ENCODE measurements at regions of chr13 and their contacts with region 1.

Region 1: DNA sequence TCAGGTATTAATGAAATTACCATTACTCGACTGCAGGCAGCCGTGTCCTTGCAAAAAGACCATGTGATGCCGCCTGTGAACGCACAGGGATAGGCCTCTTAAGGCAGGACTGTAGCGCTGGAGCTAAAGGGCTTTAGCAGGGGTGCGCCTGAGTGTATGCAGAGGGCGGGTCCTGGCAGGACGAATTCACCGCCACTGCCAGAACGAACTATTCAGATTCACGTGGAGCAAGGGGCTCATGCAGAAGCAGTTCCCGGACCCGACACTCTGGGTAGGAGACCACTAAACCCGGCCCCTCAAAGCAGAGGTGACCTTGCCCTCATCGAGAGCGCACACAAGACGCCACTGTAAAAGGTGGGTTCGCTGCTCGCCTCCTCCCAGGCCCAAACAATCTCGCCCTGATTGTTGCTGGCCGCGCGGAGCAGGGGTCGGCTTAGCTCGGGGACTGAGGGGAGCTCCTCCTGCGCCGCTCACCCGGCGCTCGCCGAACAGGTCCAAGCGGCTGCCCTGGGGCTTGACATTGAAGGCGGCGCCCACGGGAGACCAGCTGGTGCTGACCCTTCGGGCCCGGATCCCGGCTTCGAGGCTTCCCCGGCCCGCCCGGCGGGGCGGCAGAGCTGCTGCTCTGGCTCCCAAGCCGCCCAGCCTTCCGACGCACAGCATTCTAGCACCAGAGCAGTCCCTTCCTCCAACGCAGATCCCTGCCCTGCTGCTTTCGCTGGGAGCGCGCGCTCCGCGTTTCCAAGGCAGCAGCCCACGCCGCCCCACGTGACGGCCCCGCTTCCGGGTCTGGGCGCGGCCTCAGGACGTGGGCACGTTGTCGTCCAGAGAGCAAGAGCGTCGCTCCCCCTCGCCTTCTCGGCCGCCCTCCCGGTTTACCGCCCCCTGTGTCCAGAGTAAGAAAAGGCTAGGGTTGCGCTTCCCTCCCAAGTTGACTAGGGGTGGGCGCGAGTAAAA is at the start of gene MIPEP:
- DNase-seq: peak; percentile 82 to 87 (median 84)
- H3K4me3 ChIP-seq: peak within 1 kb of the TSS; percentile 43 to 88
- H3K4me3 Mint-ChIP-seq: peak within 1 kb of the TSS; percentile 89 to 95 (median 93)
- H3K27ac ChIP-seq: peak within 1 kb of the TSS; percentile 64
- H3K27ac Mint-ChIP-seq: peak within 1 kb of the TSS; percentile 75 to 92 (median 89)
- H3K4me1 ChIP-seq: peaks cover 16% of the 10 kb centered on the region
- H3K4me1 Mint-ChIP-seq: peaks cover 12 to 26% (median 19%) of the 10 kb centered on the region in 4 donors
- H3K27me3 ChIP-seq: no peaks in the 10 kb centered on the region
- H3K27me3 Mint-ChIP-seq: no peaks in the 10 kb centered on the region
- total RNA-seq, gene MIPEP: 8.8 to 9.1 TPM

Region 2: GRCh38 chr13:23899555-23899954 is 10.6 kb after region 1 on chr13:
- CTCF ChIA-PET with region 1: interaction called, 35 read pairs
- POLR2A ChIA-PET with region 1: no interaction called
- intact Hi-C with region 1: no loop called
- DNase-seq: peak in 3 of 5 donors; percentile 31 to 50 (median 34)
- H3K4me3 ChIP-seq: no peak overlapping the region
- H3K4me3 Mint-ChIP-seq: no peak overlapping the region
- H3K27ac ChIP-seq: no peak overlapping the region
- H3K27ac Mint-ChIP-seq: no peak overlapping the region
- H3K4me1 ChIP-seq: peaks cover 6% of the 10 kb centered on the region
- H3K4me1 Mint-ChIP-seq: peaks cover 1 to 14% (median 5%) of the 10 kb centered on the region in 4 donors
- H3K27me3 ChIP-seq: peaks cover 8% of the 10 kb centered on the region
- H3K27me3 Mint-ChIP-seq: peaks cover 23 to 27% of the 10 kb centered on the region in 2 donors

Region 3: DNA sequence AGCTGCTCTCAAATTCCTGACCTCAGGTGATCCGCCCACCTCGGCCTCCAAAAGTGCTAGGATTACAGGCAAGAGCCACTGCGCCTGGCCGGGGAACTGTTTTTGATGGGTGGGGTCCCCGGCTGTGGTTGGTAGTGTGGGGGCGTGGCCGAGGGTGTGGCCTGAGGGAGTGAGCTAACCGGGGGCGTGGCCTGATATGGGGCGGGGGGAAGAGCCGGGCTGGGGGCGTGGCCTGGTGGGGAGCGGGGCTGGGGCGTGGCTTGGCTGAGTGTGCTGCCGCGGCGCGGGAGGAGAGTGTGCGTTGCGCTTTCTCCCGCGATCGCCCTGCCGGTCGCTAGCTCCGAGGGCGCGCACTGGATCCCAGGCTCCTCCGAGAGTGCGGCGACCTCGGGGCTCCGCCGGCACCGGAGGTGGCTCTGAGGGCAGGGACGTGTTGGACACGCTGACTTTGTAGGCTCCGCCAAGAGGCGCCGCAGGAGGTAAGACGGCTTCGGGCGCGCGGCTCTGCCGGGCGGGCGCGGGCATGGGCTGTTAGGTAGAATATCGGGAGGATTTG is 271.6 kb after region 1 on chr13 and contains the start of gene SPATA13:
- CTCF ChIA-PET with region 1: no interaction called
- POLR2A ChIA-PET with region 1: interaction called, 3 read pairs
- intact Hi-C with region 1: loop called (anchors 2 kb)
- DNase-seq: peak; percentile 88 to 90 (median 88)
- H3K4me3 ChIP-seq: peak within 1 kb of the TSS; percentile 69
- H3K4me3 Mint-ChIP-seq: peak within 1 kb of the TSS; percentile 78 to 90 (median 86)
- H3K27ac ChIP-seq: peak within 1 kb of the TSS; percentile 19
- H3K27ac Mint-ChIP-seq: peak within 1 kb of the TSS in 5 of 7 donors; percentile 32 to 83 (median 72)
- H3K4me1 ChIP-seq: peaks cover 19% of the 10 kb centered on the region
- H3K4me1 Mint-ChIP-seq: peaks cover 9 to 16% (median 12%) of the 10 kb centered on the region in 4 donors
- H3K27me3 ChIP-seq: no peaks in the 10 kb centered on the region
- H3K27me3 Mint-ChIP-seq: peaks cover 0 to 2% of the 10 kb centered on the region in 2 donors
- total RNA-seq, gene SPATA13: 107 to 110 TPM

Region 4: DNA sequence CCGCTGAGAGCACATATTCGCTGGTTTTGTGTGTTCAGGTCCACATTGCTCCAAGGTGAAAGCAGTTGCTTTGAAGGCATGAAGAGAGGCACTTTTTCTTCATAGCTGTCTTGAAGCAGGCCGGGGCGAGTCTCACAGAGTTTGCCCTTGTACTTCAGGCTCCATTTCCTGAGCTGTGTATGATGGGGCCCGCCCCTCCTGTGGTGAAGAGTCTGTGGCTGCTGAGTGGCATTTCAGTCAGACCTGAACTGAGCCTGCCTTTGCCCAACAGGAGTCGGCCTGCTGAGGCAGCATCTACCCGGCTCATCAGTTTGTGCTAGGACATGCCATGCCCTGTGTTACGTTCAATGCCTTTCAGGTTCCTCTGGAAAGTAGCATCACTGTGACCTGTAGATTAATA is 376.0 kb after region 1 on chr13:
- CTCF ChIA-PET with region 1: no interaction called
- POLR2A ChIA-PET with region 1: no interaction called
- intact Hi-C with region 1: loop called (anchors 5 kb)
- DNase-seq: peak; percentile 83 to 93 (median 84)
- H3K4me3 ChIP-seq: peak overlapping the region; percentile 2 to 39
- H3K4me3 Mint-ChIP-seq: peak overlapping the region; percentile 68 to 92 (median 86)
- H3K27ac ChIP-seq: peak overlapping the region; percentile 73
- H3K27ac Mint-ChIP-seq: peak overlapping the region; percentile 98 to 99 (median 99)
- H3K4me1 ChIP-seq: peaks cover 100% of the 10 kb centered on the region
- H3K4me1 Mint-ChIP-seq: peaks cover 80 to 98% (median 88%) of the 10 kb centered on the region in 4 donors
- H3K27me3 ChIP-seq: no peaks in the 10 kb centered on the region
- H3K27me3 Mint-ChIP-seq: no peaks in the 10 kb centered on the region

Region 5: GRCh38 chr13:24887759-24888158 is 998.8 kb after region 1 on chr13:
- CTCF ChIA-PET with region 1: no interaction called
- POLR2A ChIA-PET with region 1: no interaction called
- intact Hi-C with region 1: no loop called
- DNase-seq: no peak
- H3K4me3 ChIP-seq: no peak overlapping the region
- H3K4me3 Mint-ChIP-seq: no peak overlapping the region
- H3K27ac ChIP-seq: no peak overlapping the region
- H3K27ac Mint-ChIP-seq: no peak overlapping the region
- H3K4me1 ChIP-seq: no peaks in the 10 kb centered on the region
- H3K4me1 Mint-ChIP-seq: no peaks in the 10 kb centered on the region
- H3K27me3 ChIP-seq: no peaks in the 10 kb centered on the region
- H3K27me3 Mint-ChIP-seq: no peaks in the 10 kb centered on the region

Measured in CD4-positive, alpha-beta memory T cell (primary cell).